HEK293T (cell line): ENCODE measurements at regions of chr17 and their contacts with region 1.

Region 1: DNA sequence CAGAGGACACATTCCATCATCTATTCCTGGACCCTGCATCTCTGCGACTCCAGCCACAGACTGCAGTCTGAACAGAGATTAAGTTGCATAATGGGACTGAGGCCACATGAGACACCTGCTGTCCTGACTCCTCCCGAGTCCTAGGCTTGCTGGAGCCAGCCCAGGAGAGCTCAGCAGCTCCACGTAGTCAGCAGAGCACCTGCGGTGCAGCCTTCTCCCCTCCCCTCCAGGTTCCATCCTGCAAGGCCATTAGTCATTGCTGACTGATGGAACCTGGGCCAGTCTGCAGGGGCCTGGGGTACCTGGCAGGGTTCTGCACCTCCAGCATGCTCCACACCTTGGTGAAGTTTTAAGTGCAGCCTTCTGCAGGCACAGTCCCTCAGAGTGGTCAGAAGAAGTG is 76.7 kb downstream of the PLD6 start:
- DNase-seq: no peak

Region 2: GRCh38 chr17:17141860-17142552 is 12.5 kb after region 1 on chr17:
- CTCF ChIA-PET with region 1: interaction called, 12 read pairs
- POLR2A ChIA-PET with region 1: interaction called, 4 read pairs
- DNase-seq: peak; percentile 86